ENCODE measurements at regions of chr2 and their contacts with region 1.

Region 1: DNA sequence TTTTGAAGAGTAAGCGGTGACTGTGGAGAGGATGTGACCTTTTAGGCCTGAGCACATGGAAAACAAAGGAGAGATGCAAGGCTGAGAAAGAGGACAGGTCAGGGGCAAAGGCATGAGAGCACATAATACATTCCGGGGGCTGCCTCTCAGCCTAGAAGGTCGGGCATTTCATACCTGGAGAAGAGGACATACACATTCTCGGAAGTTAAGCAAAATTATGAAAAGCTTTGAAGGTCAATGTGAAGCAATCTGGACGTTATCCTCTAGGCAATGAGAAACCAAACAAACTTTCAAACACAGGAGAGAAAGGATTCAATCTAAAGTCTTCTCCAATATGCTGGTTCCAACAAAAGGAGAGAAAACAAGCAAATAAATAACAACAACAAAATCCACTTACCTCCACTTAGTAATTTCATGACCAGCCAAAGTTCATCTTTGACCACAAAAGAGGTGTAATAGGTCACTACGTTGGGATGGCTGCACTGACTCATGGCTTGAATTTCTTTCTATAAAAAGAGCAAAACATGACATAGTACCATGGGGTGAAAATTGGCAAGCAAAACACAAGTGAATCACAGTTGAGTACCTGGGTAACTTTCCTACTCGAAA is 80.4 kb downstream of the STK39 start:
- DNase-seq: peak; percentile 52
- ATAC-seq: peak; percentile 82
- H3K4me3 Mint-ChIP-seq: no peak overlapping the region
- H3K27ac Mint-ChIP-seq: peak overlapping the region; percentile 74
- H3K4me1 Mint-ChIP-seq: peaks cover 58% of the 10 kb centered on the region
- H3K27me3 Mint-ChIP-seq: no peaks in the 10 kb centered on the region

Region 2: GRCh38 chr2:168194784-168195522 is 27.9 kb after region 1 on chr2:
- CTCF ChIA-PET with region 1: interaction called, 3 read pairs
- POLR2A ChIA-PET with region 1: no interaction called
- intact Hi-C with region 1: loop called (anchors 1 to 2 kb)
- DNase-seq: peak; percentile 62
- ATAC-seq: peak; percentile 85
- H3K4me3 Mint-ChIP-seq: peak overlapping the region; percentile 54
- H3K27ac Mint-ChIP-seq: peak overlapping the region; percentile 95
- H3K4me1 Mint-ChIP-seq: peaks cover 80% of the 10 kb centered on the region
- H3K27me3 Mint-ChIP-seq: no peaks in the 10 kb centered on the region

Region 3: GRCh38 chr2:168316073-168316440 is 149.1 kb after region 1 on chr2:
- CTCF ChIA-PET with region 1: no interaction called
- POLR2A ChIA-PET with region 1: no interaction called
- intact Hi-C with region 1: no loop called
- DNase-seq: no peak
- ATAC-seq: no peak
- H3K4me3 Mint-ChIP-seq: no peak overlapping the region
- H3K27ac Mint-ChIP-seq: no peak overlapping the region
- H3K4me1 Mint-ChIP-seq: no peaks in the 10 kb centered on the region
- H3K27me3 Mint-ChIP-seq: no peaks in the 10 kb centered on the region

Region 4: GRCh38 chr2:168500516-168500915 is 333.5 kb after region 1 on chr2:
- CTCF ChIA-PET with region 1: no interaction called
- POLR2A ChIA-PET with region 1: no interaction called
- intact Hi-C with region 1: no loop called
- DNase-seq: no peak
- ATAC-seq: no peak
- H3K4me3 Mint-ChIP-seq: no peak overlapping the region
- H3K27ac Mint-ChIP-seq: no peak overlapping the region
- H3K4me1 Mint-ChIP-seq: peaks cover 34% of the 10 kb centered on the region
- H3K27me3 Mint-ChIP-seq: no peaks in the 10 kb centered on the region

Measured in activated CD4-positive, alpha-beta T cell treated with anti-CD3 and anti-CD28 coated beads for 36 hours (primary cell).